Testis (tissue), 5 donors: ENCODE measurements at regions of chr2 and their contacts with region 1.

Region 1: GRCh38 chr2:126527836-126528507 is 128.0 kb upstream of the GYPC start:
- DNase-seq: peak; percentile 88
- H3K4me3 ChIP-seq: no peak overlapping the region
- H3K27ac ChIP-seq: no peak overlapping the region
- H3K4me1 ChIP-seq: no peaks in the 10 kb centered on the region
- H3K27me3 ChIP-seq: no peaks in the 10 kb centered on the region
- CTCF ChIP-seq: peak; percentile 19 to 54 (median 52)
- POLR2A ChIP-seq: no peak

Region 2: DNA sequence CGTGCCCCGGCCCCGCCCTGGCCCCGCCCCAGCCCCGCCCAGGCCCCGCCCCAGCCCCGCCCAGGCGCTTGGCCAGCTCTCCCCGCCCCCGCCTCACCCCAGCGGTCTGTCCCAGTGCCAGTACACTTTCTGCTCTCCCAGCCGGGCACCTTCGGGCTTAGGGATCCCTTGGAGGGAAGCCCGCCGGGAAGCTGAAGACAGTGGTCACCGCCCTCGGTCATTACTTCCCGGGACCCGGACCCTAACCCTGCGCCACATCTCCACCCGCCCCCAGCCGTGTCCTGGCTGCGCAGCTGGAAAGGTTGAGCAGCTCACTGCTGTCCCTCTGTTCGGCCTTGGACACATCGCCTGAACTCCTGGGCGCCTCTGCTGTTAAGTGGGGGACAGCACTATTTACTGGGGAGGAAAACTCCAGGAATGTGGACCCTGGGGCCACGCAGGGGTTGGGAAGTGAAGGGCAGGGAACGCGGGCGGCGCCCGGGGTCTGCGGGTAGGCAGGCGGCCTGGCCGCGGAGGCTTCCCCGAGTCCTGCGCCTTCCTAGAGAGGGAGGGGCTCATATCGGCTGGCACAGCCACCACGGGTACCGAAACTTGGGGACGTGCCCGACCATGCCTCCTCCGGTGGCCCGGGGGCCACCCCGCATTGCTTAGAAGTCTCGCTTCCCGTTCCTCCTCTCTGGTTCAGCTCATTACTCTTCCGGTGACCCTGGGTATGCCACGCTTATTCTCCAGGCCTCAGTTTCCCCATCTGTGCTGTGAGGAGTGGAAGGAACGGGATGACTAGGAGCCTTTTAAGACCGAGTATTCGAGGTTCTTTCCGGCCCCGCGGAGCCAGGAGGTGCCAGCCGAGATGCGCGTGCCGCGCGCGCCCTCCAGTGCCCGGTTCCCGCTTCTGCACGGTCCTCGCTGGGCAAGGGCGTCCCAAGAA is 249.0 kb after region 1 on chr2:
- intact Hi-C with region 1: loop called (anchors 5 kb)
- DNase-seq: peak; percentile 86
- H3K4me3 ChIP-seq: peak overlapping the region; percentile 36 to 58
- H3K27ac ChIP-seq: peak overlapping the region in 1 of 2 donors; percentile 5
- H3K4me1 ChIP-seq: no peaks in the 10 kb centered on the region
- H3K27me3 ChIP-seq: no peaks in the 10 kb centered on the region
- CTCF ChIP-seq: peak; percentile 80 to 85 (median 84)
- POLR2A ChIP-seq: no peak